Endothelial cell of umbilical vein (primary cell): ENCODE measurements at regions of chr2 and their contacts with region 1.

Region 1: GRCh38 chr2:30072250-30072842 is 74.5 kb upstream of the YPEL5 start:
- DNase-seq: peak; percentile 57
- H3K4me3 ChIP-seq: no peak overlapping the region
- H3K27ac ChIP-seq: no peak overlapping the region
- H3K4me1 ChIP-seq: no peaks in the 10 kb centered on the region
- H3K27me3 ChIP-seq: no peaks in the 10 kb centered on the region
- CTCF ChIP-seq: peak; percentile 50 to 75
- POLR2A ChIP-seq: no peak

Region 2: DNA sequence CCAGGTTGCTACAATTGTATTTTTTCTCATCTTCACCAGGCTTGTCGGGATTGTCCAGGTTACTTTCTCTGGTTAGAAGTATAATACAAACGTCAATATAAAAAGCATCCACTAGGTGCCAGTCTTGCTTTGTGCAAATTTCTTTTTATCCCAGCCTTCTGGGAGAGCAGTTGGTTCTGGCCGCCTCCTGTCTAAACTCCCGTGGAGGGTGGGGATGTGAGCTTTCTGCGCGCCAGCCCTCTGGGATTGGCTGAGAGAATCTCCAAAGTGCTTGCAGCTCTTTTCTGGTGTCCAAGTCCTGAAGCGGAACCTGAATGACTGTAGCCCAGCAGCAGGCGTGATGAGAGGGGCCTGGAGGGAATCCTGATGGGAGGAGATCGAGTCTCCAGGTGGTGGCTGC is 1113.7 kb before region 1 on chr2:
- CTCF ChIA-PET with region 1: interaction called, 25 read pairs
- POLR2A ChIA-PET with region 1: no interaction called
- dilution Hi-C with region 1: no loop called
- intact Hi-C with region 1: loop called (anchors 1 kb)
- DNase-seq: peak; percentile 66
- H3K4me3 ChIP-seq: no peak overlapping the region
- H3K27ac ChIP-seq: no peak overlapping the region
- H3K4me1 ChIP-seq: peaks cover 7% of the 10 kb centered on the region
- H3K27me3 ChIP-seq: no peaks in the 10 kb centered on the region
- CTCF ChIP-seq: peak; percentile 38 to 58
- POLR2A ChIP-seq: no peak

Region 3: GRCh38 chr2:29196792-29197788 is 875.3 kb before region 1 on chr2:
- CTCF ChIA-PET with region 1: no interaction called
- POLR2A ChIA-PET with region 1: no interaction called
- dilution Hi-C with region 1: no loop called
- intact Hi-C with region 1: loop called (anchors 1 kb)
- DNase-seq: peak; percentile 56
- H3K4me3 ChIP-seq: no peak overlapping the region
- H3K27ac ChIP-seq: no peak overlapping the region
- H3K4me1 ChIP-seq: peaks cover 6% of the 10 kb centered on the region
- H3K27me3 ChIP-seq: no peaks in the 10 kb centered on the region
- CTCF ChIP-seq: peak; percentile 77
- POLR2A ChIP-seq: no peak

Region 4: GRCh38 chr2:29238497-29238896 is 833.8 kb before region 1 on chr2:
- CTCF ChIA-PET with region 1: interaction called, 18 read pairs
- POLR2A ChIA-PET with region 1: no interaction called
- dilution Hi-C with region 1: no loop called
- intact Hi-C with region 1: no loop called
- DNase-seq: peak; percentile 23
- H3K4me3 ChIP-seq: no peak overlapping the region
- H3K27ac ChIP-seq: no peak overlapping the region
- H3K4me1 ChIP-seq: no peaks in the 10 kb centered on the region
- H3K27me3 ChIP-seq: peaks cover 0 to 2% of the 10 kb centered on the region in 2 experiments
- CTCF ChIP-seq: peak; percentile 68 to 77
- POLR2A ChIP-seq: no peak

Region 5: GRCh38 chr2:29923110-29923721 is 149.1 kb before region 1 on chr2:
- CTCF ChIA-PET with region 1: interaction called, 44 read pairs
- POLR2A ChIA-PET with region 1: no interaction called
- dilution Hi-C with region 1: no loop called
- intact Hi-C with region 1: loop called (anchors 1 kb)
- DNase-seq: peak; percentile 33
- H3K4me3 ChIP-seq: no peak overlapping the region
- H3K27ac ChIP-seq: no peak overlapping the region
- H3K4me1 ChIP-seq: no peaks in the 10 kb centered on the region
- H3K27me3 ChIP-seq: peaks cover 20 to 21% of the 10 kb centered on the region in 2 experiments
- CTCF ChIP-seq: peak; percentile 78 to 79
- POLR2A ChIP-seq: no peak

Region 6: DNA sequence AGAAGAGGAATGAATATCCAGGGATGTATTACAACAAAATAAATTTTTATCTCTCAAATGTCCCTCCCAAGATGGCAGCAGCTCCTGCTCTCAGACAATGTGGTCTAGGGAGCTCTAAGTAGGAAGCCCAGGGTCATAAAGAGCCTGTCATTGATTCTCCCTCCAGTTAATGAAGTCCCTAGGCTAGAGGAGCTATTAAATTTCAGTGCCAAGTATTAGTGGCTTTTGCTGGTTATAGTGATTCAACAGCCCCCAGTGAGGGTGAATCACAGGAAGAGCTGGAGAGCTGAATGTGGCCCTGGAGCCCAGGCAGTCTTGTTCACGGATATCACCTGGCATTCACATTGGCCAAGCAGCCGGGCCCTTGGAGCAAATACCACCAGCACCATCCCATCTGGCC is 35.3 kb before region 1 on chr2:
- CTCF ChIA-PET with region 1: no interaction called
- POLR2A ChIA-PET with region 1: no interaction called
- dilution Hi-C with region 1: no loop called
- intact Hi-C with region 1: no loop called
- DNase-seq: no peak
- H3K4me3 ChIP-seq: no peak overlapping the region
- H3K27ac ChIP-seq: no peak overlapping the region
- H3K4me1 ChIP-seq: no peaks in the 10 kb centered on the region
- H3K27me3 ChIP-seq: no peaks in the 10 kb centered on the region
- CTCF ChIP-seq: no peak
- POLR2A ChIP-seq: no peak